B cell (primary cell): ENCODE measurements at regions of chr12 and their contacts with region 1.

Region 1: GRCh38 chr12:94244165-94245133 is 96.1 kb downstream of the PLXNC1 start:
- DNase-seq: peak; percentile 57
- ATAC-seq: peak; percentile 32
- H3K4me3 ChIP-seq: peak overlapping the region in 1 of 5 experiments; percentile 25
- H3K4me3 Mint-ChIP-seq: peak overlapping the region; percentile 71
- H3K27ac ChIP-seq: peak overlapping the region; percentile 22 to 39
- H3K27ac Mint-ChIP-seq: peak overlapping the region; percentile 83
- H3K4me1 ChIP-seq: peaks cover 52 to 58% of the 10 kb centered on the region in 2 donors
- H3K4me1 Mint-ChIP-seq: peaks cover 59% of the 10 kb centered on the region
- H3K27me3 ChIP-seq: no peaks in the 10 kb centered on the region
- H3K27me3 Mint-ChIP-seq: no peaks in the 10 kb centered on the region
- CTCF ChIP-seq: no peak

Region 2: DNA sequence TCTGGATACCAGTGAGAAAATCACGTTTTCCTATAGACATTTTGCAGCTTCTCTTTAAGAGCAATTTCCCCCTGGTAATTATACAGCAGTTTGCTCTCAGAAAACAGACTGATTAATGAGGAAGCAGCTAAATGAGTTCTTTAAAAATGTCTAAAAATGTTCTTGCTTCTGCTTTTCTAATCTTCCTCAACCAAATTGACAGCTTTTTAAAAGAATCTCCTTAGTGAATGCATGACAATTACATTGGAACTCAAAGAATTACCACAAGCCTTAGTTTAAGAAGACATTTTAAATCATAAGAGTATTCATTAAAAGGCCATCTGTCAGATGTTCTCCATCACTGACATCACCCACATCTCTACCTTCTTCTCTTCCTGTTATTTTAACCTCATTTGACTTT is 231.9 kb before region 1 on chr12:
- CTCF ChIA-PET with region 1: no interaction called
- POLR2A ChIA-PET with region 1: no interaction called
- intact Hi-C with region 1: no loop called
- DNase-seq: no peak
- ATAC-seq: no peak
- H3K4me3 ChIP-seq: no peak overlapping the region
- H3K4me3 Mint-ChIP-seq: no peak overlapping the region
- H3K27ac ChIP-seq: no peak overlapping the region
- H3K27ac Mint-ChIP-seq: no peak overlapping the region
- H3K4me1 ChIP-seq: no peaks in the 10 kb centered on the region
- H3K4me1 Mint-ChIP-seq: peaks cover 5% of the 10 kb centered on the region
- H3K27me3 ChIP-seq: no peaks in the 10 kb centered on the region
- H3K27me3 Mint-ChIP-seq: peaks cover 15% of the 10 kb centered on the region
- CTCF ChIP-seq: no peak

Region 3: DNA sequence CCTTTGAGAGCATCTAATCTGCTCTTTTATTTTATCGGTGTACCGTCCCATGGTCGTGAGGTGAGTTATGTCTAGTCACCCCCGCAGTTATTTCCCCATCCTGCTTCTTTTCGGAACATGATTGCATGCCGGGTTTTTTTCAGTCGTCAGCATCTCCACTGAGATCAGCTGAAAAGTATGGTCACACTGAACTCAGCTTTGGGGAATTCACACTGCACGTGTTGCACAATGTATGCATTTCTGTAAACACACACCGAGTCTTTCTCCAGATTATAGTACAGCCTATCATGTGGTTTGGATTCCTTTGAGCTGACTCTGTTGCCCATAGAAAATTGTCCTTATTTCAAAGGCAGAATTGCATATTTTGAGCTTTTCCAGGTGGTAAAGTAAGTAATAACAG is 71.5 kb before region 1 on chr12:
- CTCF ChIA-PET with region 1: no interaction called
- POLR2A ChIA-PET with region 1: no interaction called
- intact Hi-C with region 1: loop called (anchors 2 kb)
- DNase-seq: peak; percentile 54
- ATAC-seq: no peak
- H3K4me3 ChIP-seq: peak overlapping the region in 1 of 5 experiments; percentile 57
- H3K4me3 Mint-ChIP-seq: peak overlapping the region; percentile 68
- H3K27ac ChIP-seq: peak overlapping the region; percentile 5 to 7
- H3K27ac Mint-ChIP-seq: peak overlapping the region; percentile 54
- H3K4me1 ChIP-seq: peaks cover 37 to 43% of the 10 kb centered on the region in 2 donors
- H3K4me1 Mint-ChIP-seq: peaks cover 53% of the 10 kb centered on the region
- H3K27me3 ChIP-seq: no peaks in the 10 kb centered on the region
- H3K27me3 Mint-ChIP-seq: no peaks in the 10 kb centered on the region
- CTCF ChIP-seq: no peak

Region 4: DNA sequence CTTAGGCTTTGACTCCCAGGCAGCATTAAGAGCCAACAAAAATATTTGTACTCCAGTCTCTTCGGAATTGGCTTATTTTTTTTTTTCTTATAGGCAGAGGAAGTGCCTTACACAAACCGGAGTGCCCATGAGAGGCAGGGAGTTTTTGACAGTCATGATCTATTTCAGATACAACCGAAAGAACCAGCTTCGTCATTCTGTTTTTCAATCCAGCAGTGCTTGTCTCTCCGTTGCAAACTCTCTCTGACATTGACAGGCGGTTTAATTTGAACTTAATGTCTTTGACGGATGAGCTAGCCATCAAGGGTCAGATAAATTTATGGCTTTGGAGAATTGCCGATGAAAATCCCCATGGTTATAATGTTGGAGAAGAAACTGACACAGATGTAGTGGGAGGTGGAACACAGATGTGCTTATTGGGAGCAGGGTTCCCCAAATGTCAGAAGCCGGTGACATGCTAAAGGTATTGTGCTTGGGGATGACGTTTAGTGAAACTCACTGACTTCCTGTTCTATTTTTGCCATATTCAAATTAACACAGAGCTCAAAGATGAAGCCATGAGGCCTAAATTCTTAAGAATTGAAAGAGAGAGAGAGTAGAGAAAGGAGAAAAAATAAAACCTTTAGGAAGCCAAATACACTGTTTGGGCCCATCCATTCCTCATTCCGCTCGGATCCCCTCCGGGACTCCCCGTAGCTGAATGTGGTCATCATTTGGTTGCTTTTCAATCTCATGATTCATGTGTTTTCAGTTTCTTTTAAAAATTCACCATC is 36.4 kb before region 1 on chr12:
- CTCF ChIA-PET with region 1: interaction called, 5 read pairs
- POLR2A ChIA-PET with region 1: no interaction called
- intact Hi-C with region 1: loop called (anchors 1 kb)
- DNase-seq: peak; percentile 89
- ATAC-seq: peak; percentile 84
- H3K4me3 ChIP-seq: peak overlapping the region; percentile 26 to 65 (median 57)
- H3K4me3 Mint-ChIP-seq: peak overlapping the region; percentile 87
- H3K27ac ChIP-seq: peak overlapping the region; percentile 93 to 96
- H3K27ac Mint-ChIP-seq: peak overlapping the region; percentile 96
- H3K4me1 ChIP-seq: peaks cover 54 to 56% of the 10 kb centered on the region in 2 donors
- H3K4me1 Mint-ChIP-seq: peaks cover 62% of the 10 kb centered on the region
- H3K27me3 ChIP-seq: no peaks in the 10 kb centered on the region
- H3K27me3 Mint-ChIP-seq: no peaks in the 10 kb centered on the region
- CTCF ChIP-seq: no peak

Region 5: GRCh38 chr12:94222351-94223084 is 21.9 kb before region 1 on chr12:
- CTCF ChIA-PET with region 1: interaction called, 3 read pairs
- POLR2A ChIA-PET with region 1: no interaction called
- intact Hi-C with region 1: loop called (anchors 2 kb)
- DNase-seq: peak; percentile 39
- ATAC-seq: peak; percentile 74
- H3K4me3 ChIP-seq: no peak overlapping the region
- H3K4me3 Mint-ChIP-seq: peak overlapping the region; percentile 26
- H3K27ac ChIP-seq: no peak overlapping the region
- H3K27ac Mint-ChIP-seq: no peak overlapping the region
- H3K4me1 ChIP-seq: peaks cover 34 to 35% of the 10 kb centered on the region in 2 donors
- H3K4me1 Mint-ChIP-seq: peaks cover 33% of the 10 kb centered on the region
- H3K27me3 ChIP-seq: no peaks in the 10 kb centered on the region
- H3K27me3 Mint-ChIP-seq: no peaks in the 10 kb centered on the region
- CTCF ChIP-seq: no peak

Region 6: GRCh38 chr12:94262228-94263010 is 18.0 kb after region 1 on chr12:
- CTCF ChIA-PET with region 1: interaction called, 3 read pairs
- POLR2A ChIA-PET with region 1: interaction called, 6 read pairs
- intact Hi-C with region 1: loop called (anchors 1 kb)
- DNase-seq: peak; percentile 86
- ATAC-seq: peak; percentile 82
- H3K4me3 ChIP-seq: peak overlapping the region; percentile 48 to 77 (median 64)
- H3K4me3 Mint-ChIP-seq: peak overlapping the region; percentile 99
- H3K27ac ChIP-seq: peak overlapping the region; percentile 81 to 90
- H3K27ac Mint-ChIP-seq: peak overlapping the region; percentile 99
- H3K4me1 ChIP-seq: peaks cover 45% of the 10 kb centered on the region in 2 donors
- H3K4me1 Mint-ChIP-seq: peaks cover 58% of the 10 kb centered on the region
- H3K27me3 ChIP-seq: no peaks in the 10 kb centered on the region
- H3K27me3 Mint-ChIP-seq: no peaks in the 10 kb centered on the region
- CTCF ChIP-seq: no peak

Region 7: DNA sequence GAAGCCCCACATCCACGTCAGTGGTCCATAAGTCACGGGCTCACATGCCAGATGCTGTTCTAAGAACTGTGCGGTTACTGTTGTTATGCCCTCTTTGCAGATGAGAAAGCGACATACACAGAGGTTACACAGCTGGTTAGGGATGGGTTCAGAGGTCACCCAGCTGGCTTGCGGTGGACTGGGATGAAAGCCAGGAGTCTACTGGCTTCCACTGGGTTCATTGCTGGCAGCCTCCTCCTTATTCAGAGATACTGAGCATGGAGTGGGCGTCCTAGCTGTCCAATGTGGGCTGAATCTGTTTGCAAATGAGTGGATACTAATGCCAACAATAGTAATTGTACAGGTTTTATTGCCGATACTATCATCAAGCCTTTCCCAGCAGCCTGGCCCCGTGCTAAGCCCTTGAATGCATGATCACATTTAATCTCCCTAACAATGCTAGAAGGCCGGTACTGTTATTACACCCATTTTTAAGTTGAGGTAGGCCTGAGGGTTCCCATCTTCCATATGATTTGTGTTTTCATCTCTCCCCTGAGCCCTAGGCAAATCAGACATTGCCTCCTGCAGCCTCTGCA is 33.1 kb after region 1 on chr12:
- CTCF ChIA-PET with region 1: no interaction called
- POLR2A ChIA-PET with region 1: no interaction called
- intact Hi-C with region 1: loop called (anchors 5 kb)
- DNase-seq: no peak
- ATAC-seq: no peak
- H3K4me3 ChIP-seq: no peak overlapping the region
- H3K4me3 Mint-ChIP-seq: no peak overlapping the region
- H3K27ac ChIP-seq: no peak overlapping the region
- H3K27ac Mint-ChIP-seq: no peak overlapping the region
- H3K4me1 ChIP-seq: peaks cover 3 to 5% of the 10 kb centered on the region in 2 donors
- H3K4me1 Mint-ChIP-seq: peaks cover 17% of the 10 kb centered on the region
- H3K27me3 ChIP-seq: no peaks in the 10 kb centered on the region
- H3K27me3 Mint-ChIP-seq: no peaks in the 10 kb centered on the region
- CTCF ChIP-seq: no peak